Activated T-helper 1 cell treated with anti-CD3 and anti-CD28 coated beads, Interleukin-12 subunit alpha, Interleukin-12 subunit beta, Interleukin-2, Interleukin-4 antibody, amounts not matched to agents 30 ng/mL and 10 ng/mL and 1 ng/mL, durations not matched to agents 14 hours and 24 hours and 36 hours (primary cell): ENCODE measurements at regions of chr19 and their contacts with region 1.

Region 1: DNA sequence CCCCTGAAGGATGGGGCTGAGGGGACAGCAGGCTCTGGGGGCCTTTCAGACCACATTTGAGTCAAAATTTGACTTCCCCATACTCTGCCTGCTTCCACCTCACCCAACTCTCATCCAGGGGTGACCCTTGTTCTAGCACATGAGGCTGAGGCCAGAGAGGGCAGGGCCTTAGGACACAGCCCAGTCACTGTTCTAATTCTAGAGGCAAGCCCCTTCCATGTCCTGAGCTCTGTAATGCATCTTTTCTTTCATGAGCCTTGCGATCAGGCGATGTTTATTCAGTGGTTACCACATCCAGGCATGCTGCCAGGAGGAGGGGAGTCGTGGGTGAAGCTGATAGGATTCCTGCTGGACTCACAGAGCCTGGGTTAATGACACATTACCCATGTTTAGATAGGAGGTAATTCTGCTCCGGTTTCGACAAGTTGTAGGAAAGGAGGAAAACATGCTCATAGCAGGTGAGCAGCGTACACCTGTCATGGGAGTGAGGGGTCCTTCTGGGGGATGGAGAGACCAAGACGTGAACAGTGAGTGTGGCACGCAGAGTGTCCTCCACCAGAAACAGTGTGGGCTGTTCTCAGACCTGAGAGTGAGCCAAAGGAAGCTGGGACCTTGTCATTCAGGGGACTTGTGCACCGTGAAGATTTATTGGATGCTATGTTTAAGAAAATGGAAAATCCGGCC is 9.3 kb downstream of the RPS9 start:
- DNase-seq: no peak
- H3K4me3 Mint-ChIP-seq: peak overlapping the region; percentile 3
- H3K27ac Mint-ChIP-seq: peak overlapping the region; percentile 79
- H3K4me1 Mint-ChIP-seq: peaks cover 61% of the 10 kb centered on the region
- H3K27me3 Mint-ChIP-seq: no peaks in the 10 kb centered on the region

Region 2: DNA sequence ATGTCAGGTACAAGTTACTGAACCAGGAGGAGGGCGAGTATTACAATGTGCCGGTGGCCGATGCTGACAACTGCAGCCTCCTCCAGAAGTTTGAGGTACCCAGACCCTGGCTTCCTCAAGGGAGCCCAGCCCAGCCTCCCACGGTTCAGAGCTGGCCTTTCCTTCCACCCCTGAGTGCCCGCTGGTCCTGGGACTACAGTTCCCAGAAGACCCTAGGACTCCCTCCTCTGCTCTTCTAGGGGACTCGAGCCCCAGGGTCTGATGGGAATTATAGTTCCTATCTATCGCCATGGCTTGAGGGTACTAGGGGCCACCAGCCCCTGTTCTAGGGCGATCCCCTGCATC is 317.0 kb before region 1 on chr19:
- intact Hi-C with region 1: no loop called
- DNase-seq: no peak
- H3K4me3 Mint-ChIP-seq: no peak overlapping the region
- H3K27ac Mint-ChIP-seq: no peak overlapping the region
- H3K4me1 Mint-ChIP-seq: peaks cover 5% of the 10 kb centered on the region
- H3K27me3 Mint-ChIP-seq: peaks cover 12% of the 10 kb centered on the region

Region 3: DNA sequence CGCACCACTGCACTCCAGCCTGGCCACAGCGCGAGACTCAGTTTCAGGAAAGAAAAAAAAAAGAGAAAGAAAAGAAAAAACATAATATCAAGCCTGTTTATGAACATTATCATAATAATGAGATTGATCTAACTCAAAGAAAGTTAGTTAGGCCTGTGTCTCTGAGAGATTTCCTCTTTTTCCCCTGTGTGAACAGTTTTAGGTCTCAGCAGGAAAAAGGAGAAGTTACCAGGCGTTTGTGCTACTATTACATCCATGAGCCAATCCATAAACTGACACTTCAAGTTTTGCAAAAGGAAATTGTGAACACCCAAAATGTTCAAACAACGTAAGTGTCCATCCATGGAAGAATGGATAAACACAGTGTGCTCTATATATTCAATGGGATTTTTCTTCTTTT is 132.6 kb before region 1 on chr19:
- intact Hi-C with region 1: no loop called
- DNase-seq: no peak
- H3K4me3 Mint-ChIP-seq: no peak overlapping the region
- H3K27ac Mint-ChIP-seq: no peak overlapping the region
- H3K4me1 Mint-ChIP-seq: no peaks in the 10 kb centered on the region
- H3K27me3 Mint-ChIP-seq: no peaks in the 10 kb centered on the region

Region 4: DNA sequence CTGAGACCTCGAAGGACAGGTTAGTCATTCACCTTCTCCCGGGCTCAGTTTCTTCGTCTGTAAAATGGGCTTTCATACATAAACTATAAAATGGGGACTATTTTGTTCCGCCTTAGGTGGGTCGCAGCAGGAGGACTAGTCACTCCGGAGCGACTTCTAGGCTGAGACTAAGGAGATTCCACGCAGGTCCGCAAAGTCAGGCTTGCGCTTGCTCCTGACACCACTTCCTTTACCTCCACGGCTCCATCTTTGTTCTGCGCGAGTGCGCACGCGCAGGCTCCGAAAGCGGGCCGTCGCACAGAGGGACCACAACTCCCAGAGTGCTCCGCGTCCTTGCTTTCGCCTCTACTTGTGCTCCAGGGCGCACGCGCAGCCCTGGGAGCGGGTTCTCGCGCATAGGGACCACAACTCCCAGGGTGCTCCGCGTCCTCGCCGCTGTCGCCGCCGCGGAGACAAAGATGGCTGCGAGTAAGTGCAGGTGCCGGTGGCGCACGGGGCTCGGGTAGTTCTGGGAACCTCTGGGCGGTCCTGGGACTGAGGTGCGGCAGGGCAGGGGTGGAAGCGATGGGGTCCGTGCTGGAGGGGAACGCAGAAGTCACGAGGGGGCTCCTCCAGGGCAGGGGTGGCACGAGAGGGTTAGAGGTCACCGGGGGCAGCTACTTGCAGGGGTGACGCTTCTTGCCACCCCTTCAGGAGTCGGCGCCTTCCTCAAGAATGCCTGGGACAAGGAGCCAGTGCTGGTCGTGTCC is 107.4 kb before region 1 on chr19 and contains the start of gene NDUFA3:
- intact Hi-C with region 1: no loop called
- DNase-seq: peak; percentile 98
- H3K4me3 Mint-ChIP-seq: peak within 1 kb of the TSS; percentile 99
- H3K27ac Mint-ChIP-seq: peak within 1 kb of the TSS; percentile 87
- H3K4me1 Mint-ChIP-seq: peaks cover 17% of the 10 kb centered on the region
- H3K27me3 Mint-ChIP-seq: no peaks in the 10 kb centered on the region
- total RNA-seq, gene NDUFA3: 110 and 125 TPM in 2 replicates

Region 5: GRCh38 chr19:54231077-54231931 is 21.4 kb after region 1 on chr19:
- intact Hi-C with region 1: loop called (anchors 2 kb)
- DNase-seq: peak; percentile 77
- H3K4me3 Mint-ChIP-seq: no peak overlapping the region
- H3K27ac Mint-ChIP-seq: no peak overlapping the region
- H3K4me1 Mint-ChIP-seq: peaks cover 6% of the 10 kb centered on the region
- H3K27me3 Mint-ChIP-seq: peaks cover 43% of the 10 kb centered on the region